Activated CD4-positive, alpha-beta T cell treated with anti-CD3 and anti-CD28 coated beads, Interleukin-2, amount 10 ng/mL, durations not matched to agents 24 days and 14 days (primary cell): ENCODE measurements at regions of chr1 and their contacts with region 1.

Region 1: DNA sequence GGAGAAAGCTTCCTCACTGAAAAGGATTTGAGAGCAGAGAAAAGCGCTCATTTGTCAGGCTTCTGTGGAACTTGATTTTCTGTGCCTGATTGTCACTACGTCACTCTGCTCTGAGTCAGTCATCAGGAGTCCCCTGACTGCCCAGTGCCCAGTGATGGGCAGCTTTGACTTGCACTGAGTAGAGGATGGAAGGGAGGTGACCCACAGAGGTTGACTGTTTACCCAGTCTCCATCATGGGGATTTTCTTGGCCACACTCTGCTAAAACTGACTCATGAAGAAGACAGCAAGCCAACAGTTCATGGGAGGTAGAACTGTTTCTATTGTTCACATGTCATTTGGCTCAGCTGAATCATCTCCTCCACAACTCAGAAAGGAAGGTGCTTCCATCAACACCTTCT is 82.1 kb upstream of the DUSP10 start:
- DNase-seq: peak; percentile 57
- H3K4me3 Mint-ChIP-seq: no peak overlapping the region
- H3K27ac Mint-ChIP-seq: peak overlapping the region; percentile 40
- H3K4me1 Mint-ChIP-seq: peaks cover 52% of the 10 kb centered on the region
- H3K27me3 Mint-ChIP-seq: no peaks in the 10 kb centered on the region

Region 2: GRCh38 chr1:220914283-220915116 is 909.5 kb before region 1 on chr1:
- intact Hi-C with region 1: no loop called
- DNase-seq: no peak
- H3K4me3 Mint-ChIP-seq: no peak overlapping the region
- H3K27ac Mint-ChIP-seq: peak overlapping the region; percentile 17
- H3K4me1 Mint-ChIP-seq: no peaks in the 10 kb centered on the region
- H3K27me3 Mint-ChIP-seq: no peaks in the 10 kb centered on the region

Region 3: GRCh38 chr1:221230605-221231004 is 593.4 kb before region 1 on chr1:
- intact Hi-C with region 1: no loop called
- DNase-seq: no peak
- H3K4me3 Mint-ChIP-seq: no peak overlapping the region
- H3K27ac Mint-ChIP-seq: no peak overlapping the region
- H3K4me1 Mint-ChIP-seq: peaks cover 3% of the 10 kb centered on the region
- H3K27me3 Mint-ChIP-seq: no peaks in the 10 kb centered on the region

Region 4: DNA sequence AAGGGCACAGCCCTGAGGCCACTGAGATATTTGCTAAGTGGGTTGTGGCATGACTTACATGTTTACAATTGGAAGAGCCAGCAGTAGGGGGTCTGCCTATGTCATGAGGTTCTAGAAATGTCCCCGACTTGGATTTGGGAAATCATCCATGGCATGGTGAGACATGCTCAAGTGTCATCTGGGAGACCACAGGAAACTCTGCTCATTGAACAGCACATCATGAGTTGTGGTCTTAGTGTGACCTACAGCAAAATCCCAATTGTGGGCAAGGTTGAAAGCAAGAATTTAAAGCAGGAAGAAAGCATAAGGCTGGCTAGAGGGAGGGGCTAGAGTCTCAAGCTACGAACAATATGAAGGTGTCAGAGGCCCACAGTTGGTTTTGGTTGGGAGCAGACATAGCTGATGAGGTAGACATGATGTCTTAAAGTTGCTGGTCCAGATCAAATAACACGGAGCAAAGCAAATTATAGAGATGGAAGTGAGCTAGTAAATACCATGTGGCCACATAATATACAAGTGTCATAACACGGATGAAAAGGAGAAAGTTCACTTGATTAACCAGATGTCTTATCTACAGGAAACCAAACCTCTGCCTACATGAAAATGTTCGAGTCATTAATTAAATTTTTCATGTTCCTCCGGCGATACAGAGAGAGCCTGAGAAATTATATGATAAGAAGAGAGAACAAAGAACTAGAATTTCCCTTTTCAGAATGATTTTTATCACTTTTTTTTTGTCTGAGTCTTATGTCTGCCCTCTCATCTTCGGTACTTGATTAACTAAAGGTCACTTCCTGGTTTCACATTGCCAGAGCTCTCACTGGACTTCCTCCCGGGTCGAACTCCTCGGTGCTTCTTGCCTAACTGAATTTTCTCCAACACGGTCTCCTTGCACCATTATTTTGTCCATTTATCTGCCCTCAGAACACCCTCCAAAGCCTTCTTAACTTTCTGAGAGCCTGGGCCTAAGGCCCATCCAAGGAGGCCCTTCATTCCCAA is 14.7 kb before region 1 on chr1:
- intact Hi-C with region 1: loop called (anchors 2 kb)
- DNase-seq: peak; percentile 54
- H3K4me3 Mint-ChIP-seq: peak overlapping the region; percentile 6
- H3K27ac Mint-ChIP-seq: peak overlapping the region; percentile 67
- H3K4me1 Mint-ChIP-seq: peaks cover 32% of the 10 kb centered on the region
- H3K27me3 Mint-ChIP-seq: no peaks in the 10 kb centered on the region

Region 5: GRCh38 chr1:222057162-222057561 is 233.1 kb after region 1 on chr1:
- intact Hi-C with region 1: no loop called
- DNase-seq: no peak
- H3K4me3 Mint-ChIP-seq: no peak overlapping the region
- H3K27ac Mint-ChIP-seq: no peak overlapping the region
- H3K4me1 Mint-ChIP-seq: no peaks in the 10 kb centered on the region
- H3K27me3 Mint-ChIP-seq: no peaks in the 10 kb centered on the region

Region 6: DNA sequence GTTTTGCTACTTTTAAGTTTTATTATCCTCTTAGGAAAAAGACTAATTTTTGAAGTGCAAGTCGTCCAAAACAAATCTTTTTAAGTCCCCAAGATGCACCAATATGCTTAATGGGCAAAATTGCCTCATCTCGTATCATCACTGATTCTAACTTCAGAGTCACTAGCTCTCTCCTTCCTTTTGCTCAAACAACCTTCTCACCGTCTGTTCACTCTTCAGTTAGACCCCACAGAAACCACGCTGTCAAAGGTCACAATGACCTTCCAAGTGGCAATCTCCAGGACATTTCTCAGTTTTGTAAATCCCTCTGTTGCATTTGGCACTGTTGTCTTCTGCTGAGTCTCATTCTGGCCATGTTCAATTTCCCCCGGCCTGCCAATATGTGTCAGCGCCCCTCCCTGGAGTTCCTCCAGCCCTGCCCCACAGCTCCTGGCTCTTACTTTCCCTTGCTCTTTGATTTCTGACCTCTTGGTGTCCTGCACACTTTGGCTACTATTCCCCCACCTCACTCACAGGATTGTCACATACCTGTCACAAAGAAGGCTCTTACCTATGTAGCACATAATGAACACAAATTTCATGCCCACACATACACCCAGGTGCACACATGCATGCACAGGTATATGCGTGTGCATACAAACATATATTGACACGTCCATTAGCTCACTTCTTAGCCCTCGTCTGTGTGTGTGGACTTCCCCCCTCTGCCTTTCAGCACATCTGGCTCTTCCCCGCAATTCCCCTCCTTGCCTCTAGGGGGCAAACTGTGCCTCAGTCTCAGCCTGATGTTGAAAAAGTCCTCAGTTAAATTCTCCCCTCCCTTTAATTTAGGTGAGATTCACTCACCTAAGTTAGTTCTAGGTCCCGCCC is 271.8 kb after region 1 on chr1:
- intact Hi-C with region 1: no loop called
- DNase-seq: peak; percentile 86
- H3K4me3 Mint-ChIP-seq: no peak overlapping the region
- H3K27ac Mint-ChIP-seq: no peak overlapping the region
- H3K4me1 Mint-ChIP-seq: no peaks in the 10 kb centered on the region
- H3K27me3 Mint-ChIP-seq: peaks cover 3% of the 10 kb centered on the region